HAP-1 (cell line): ENCODE measurements at regions of chr17 and their contacts with region 1.

Region 1: DNA sequence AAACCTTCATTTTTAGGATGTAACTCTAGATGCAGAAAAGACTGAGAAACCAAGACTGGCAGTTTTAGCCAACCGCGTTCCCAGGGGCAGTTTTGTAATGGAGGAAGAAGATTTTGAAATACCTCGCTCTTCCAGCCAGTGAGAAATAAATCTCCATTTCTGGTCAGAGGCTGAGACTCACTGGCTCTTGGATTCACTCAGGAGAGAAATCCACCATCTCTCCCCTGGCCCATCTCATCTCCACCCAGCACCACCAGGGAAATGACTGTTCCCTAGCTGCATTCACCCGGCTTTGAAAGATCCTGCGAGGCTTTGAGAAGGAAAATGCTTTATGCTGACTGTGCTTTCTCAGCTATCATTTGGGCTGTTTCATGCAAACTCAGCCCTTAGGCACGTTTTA is 185.2 kb downstream of the SOX9 start:
- DNase-seq: no peak
- H3K4me3 ChIP-seq: no peak overlapping the region
- H3K4me1 ChIP-seq: no peaks in the 10 kb centered on the region
- H3K27me3 ChIP-seq: no peaks in the 10 kb centered on the region

Region 2: DNA sequence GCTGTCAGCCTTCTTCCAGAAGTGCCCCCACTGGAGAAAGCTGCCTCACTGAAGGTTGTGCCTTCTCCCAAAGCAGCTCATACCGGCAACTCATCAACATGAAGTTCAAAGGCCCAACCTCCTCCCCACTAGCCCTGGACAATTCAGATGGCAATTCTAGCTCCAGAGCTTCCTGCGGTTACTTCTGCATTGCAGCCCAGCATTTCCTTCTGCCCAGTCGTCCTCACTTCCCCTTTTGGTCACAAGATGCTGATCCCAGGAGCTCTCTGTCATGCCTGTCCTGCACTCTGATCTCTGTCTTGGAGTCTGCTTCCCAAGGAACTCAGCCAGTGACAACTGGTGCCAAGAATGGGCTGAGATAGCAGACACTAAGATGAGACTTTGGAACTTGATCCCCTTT is 363.4 kb before region 1 on chr17:
- in situ Hi-C with region 1: no loop called
- DNase-seq: no peak
- H3K4me3 ChIP-seq: no peak overlapping the region
- H3K4me1 ChIP-seq: no peaks in the 10 kb centered on the region
- H3K27me3 ChIP-seq: no peaks in the 10 kb centered on the region

Region 3: GRCh38 chr17:72004611-72005331 is 301.3 kb before region 1 on chr17:
- in situ Hi-C with region 1: no loop called
- DNase-seq: no peak
- H3K4me3 ChIP-seq: no peak overlapping the region
- H3K4me1 ChIP-seq: no peaks in the 10 kb centered on the region
- H3K27me3 ChIP-seq: no peaks in the 10 kb centered on the region

Region 4: DNA sequence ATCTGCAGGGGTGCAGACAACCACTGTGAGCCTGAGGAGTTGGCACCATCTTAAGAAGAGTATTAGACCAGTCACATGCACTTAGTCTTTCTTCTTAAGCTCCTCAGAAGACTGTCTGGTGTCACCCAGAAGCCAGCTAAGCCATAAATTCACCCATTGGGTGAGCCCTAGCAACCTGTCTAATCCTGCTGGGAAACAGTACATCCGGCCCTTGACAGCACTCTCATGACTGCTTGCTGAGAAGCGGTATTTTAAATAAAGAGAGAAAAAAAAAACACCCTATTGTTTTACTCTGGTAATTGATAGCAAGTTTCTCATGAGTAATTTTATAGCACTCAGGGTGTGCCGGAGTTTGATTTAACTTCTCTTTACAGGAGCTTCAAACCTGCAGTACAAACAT is 50.6 kb before region 1 on chr17:
- in situ Hi-C with region 1: no loop called
- DNase-seq: no peak
- H3K4me3 ChIP-seq: no peak overlapping the region
- H3K4me1 ChIP-seq: no peaks in the 10 kb centered on the region
- H3K27me3 ChIP-seq: no peaks in the 10 kb centered on the region

Region 5: DNA sequence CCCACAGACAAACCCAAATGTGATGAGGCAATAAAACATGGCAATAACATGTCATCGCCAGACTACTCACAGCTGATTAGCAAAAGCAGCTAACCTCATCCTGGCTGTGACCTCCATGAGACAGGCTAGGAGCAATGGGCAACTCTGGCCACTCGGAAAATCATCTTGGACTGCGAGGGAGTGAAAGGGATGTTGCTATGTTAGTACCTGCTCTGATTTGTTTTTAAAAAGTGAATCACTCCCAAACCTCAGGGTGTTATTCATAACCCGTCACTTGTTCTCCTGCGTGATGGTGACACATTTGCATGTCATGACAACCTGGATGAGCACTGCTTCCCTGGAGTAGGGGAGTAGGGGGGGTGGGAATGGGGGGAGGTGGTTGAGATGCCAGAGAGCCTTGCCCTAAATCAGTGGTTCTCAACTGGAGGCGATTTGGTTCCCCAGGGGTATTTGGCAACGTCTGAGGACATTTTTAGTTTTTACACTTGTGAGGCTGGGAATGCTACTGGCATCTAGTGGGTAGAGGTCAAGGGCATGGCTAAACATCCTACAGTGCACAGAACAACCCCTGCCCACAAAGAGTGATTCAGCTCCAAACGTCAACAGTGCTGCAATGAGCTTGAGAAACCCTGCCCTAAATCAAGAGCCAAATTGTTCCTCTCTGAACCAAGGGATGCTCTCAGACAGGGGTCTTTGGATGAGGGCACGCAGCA is 56.5 kb after region 1 on chr17:
- in situ Hi-C with region 1: loop called (anchors 10 kb)
- DNase-seq: no peak
- H3K4me3 ChIP-seq: no peak overlapping the region
- H3K4me1 ChIP-seq: no peaks in the 10 kb centered on the region
- H3K27me3 ChIP-seq: no peaks in the 10 kb centered on the region